ENCODE measurements at regions of chr21 and their contacts with region 1.

Region 1: GRCh38 chr21:31158789-31159581 is 120.7 kb upstream of the KRTAP19-8 start:
- DNase-seq: no peak
- ATAC-seq: no peak
- H3K4me3 ChIP-seq: no peak overlapping the region
- H3K27ac ChIP-seq: no peak overlapping the region
- H3K4me1 ChIP-seq: no peaks in the 10 kb centered on the region
- H3K27me3 ChIP-seq: no peaks in the 10 kb centered on the region; the same call in 1 of the 2 replicates
- CTCF ChIP-seq: no peak

Region 2: GRCh38 chr21:31604591-31605190 is 445.7 kb after region 1 on chr21:
- CTCF ChIA-PET with region 1: no interaction called
- POLR2A ChIA-PET with region 1: interaction called, 18 read pairs
- in situ Hi-C with region 1: no loop called
- intact Hi-C with region 1: no loop called
- DNase-seq: peak; percentile 22
- ATAC-seq: peak; percentile 82
- H3K4me3 ChIP-seq: no peak overlapping the region
- H3K27ac ChIP-seq: no peak overlapping the region
- H3K4me1 ChIP-seq: no peaks in the 10 kb centered on the region
- H3K27me3 ChIP-seq: no peaks in the 10 kb centered on the region
- CTCF ChIP-seq: peak; percentile 84